Naive thymus-derived CD4-positive, alpha-beta T cell (primary cell): ENCODE measurements at regions of chr6 and their contacts with region 1.

Region 1: GRCh38 chr6:30877419-30878371 is 6.6 kb upstream of the DDR1 start:
- DNase-seq: peak; percentile 52 to 72 (median 63)
- ATAC-seq: peak; percentile 93
- H3K4me3 ChIP-seq: peak overlapping the region; percentile 40
- H3K4me3 Mint-ChIP-seq: peak overlapping the region; percentile 69 to 90 (median 86)
- H3K27ac ChIP-seq: peak overlapping the region; percentile 50
- H3K27ac Mint-ChIP-seq: peak overlapping the region; percentile 44 to 91 (median 84)
- H3K4me1 ChIP-seq: peaks cover 8 to 15% of the 10 kb centered on the region in 2 donors
- H3K4me1 Mint-ChIP-seq: peaks cover 10 to 31% (median 19%) of the 10 kb centered on the region in 7 donors
- H3K27me3 ChIP-seq: no peaks in the 10 kb centered on the region
- H3K27me3 Mint-ChIP-seq: peaks cover 0 to 7% (median 0%) of the 10 kb centered on the region in 5 donors

Region 2: DNA sequence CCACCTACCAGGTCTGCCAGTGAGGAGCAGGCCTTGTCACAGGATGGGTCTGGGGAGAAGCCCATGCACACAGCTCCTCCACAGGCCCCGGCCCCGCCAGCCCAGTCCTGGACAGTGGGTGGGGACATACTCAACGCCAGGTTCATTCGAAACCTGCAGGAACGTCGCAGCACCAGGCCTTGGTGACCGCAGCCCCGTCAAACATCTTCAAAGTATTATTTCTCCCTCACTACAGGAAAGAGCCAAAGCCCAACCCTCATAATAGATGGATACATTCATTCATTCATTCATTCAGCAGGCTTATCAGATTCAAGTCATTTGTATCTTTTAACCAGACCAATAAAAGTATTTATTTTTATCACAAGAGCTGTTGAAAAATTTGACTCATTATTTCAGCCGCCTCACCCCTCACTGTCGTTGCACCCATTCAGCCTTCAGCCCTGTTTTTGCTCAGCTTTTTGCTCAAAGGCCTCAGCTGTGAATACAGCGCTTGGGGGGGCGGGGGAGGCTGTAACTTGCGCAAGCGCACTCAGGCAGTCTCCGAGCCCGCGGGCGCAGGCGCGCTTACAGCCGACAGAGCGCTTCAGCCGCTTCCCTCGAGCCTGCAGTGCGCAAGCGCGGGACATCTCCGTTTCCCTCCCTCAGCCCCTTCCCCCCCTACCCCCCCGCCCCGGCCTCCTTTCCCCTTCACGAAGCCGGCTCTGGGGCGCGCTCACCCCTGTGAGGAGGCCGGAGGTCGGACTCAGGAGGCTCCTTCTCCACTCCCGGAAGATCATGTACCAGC is 231.0 kb before region 1 on chr6 and contains the start of gene C6orf136:
- CTCF ChIA-PET with region 1: no interaction called
- POLR2A ChIA-PET with region 1: no interaction called
- intact Hi-C with region 1: no loop called
- DNase-seq: peak in 8 of 9 donors; percentile 77 to 94 (median 92)
- ATAC-seq: peak; percentile 90
- H3K4me3 ChIP-seq: peak within 1 kb of the TSS; percentile 93
- H3K4me3 Mint-ChIP-seq: peak within 1 kb of the TSS; percentile 82 to 93 (median 88)
- H3K27ac ChIP-seq: peak within 1 kb of the TSS; percentile 91
- H3K27ac Mint-ChIP-seq: peak within 1 kb of the TSS; percentile 79 to 93 (median 91)
- H3K4me1 ChIP-seq: peaks cover 11 to 17% of the 10 kb centered on the region in 2 donors
- H3K4me1 Mint-ChIP-seq: peaks cover 24 to 38% (median 32%) of the 10 kb centered on the region in 7 donors
- H3K27me3 ChIP-seq: no peaks in the 10 kb centered on the region
- H3K27me3 Mint-ChIP-seq: no peaks in the 10 kb centered on the region
- total RNA-seq, gene C6orf136: 23.7 to 38.0 (median 32.1) TPM

Region 3: GRCh38 chr6:30678964-30679726 is 198.6 kb before region 1 on chr6:
- CTCF ChIA-PET with region 1: interaction called, 4 read pairs
- POLR2A ChIA-PET with region 1: no interaction called
- intact Hi-C with region 1: loop called in 1 of 2 experiments (anchors 1 kb)
- DNase-seq: peak; percentile 86 to 97 (median 92)
- ATAC-seq: peak; percentile 65
- H3K4me3 ChIP-seq: peak overlapping the region; percentile 98
- H3K4me3 Mint-ChIP-seq: peak overlapping the region; percentile 90 to 100 (median 97)
- H3K27ac ChIP-seq: peak overlapping the region; percentile 95
- H3K27ac Mint-ChIP-seq: peak overlapping the region; percentile 85 to 99 (median 97)
- H3K4me1 ChIP-seq: peaks cover 5 to 24% of the 10 kb centered on the region in 2 donors
- H3K4me1 Mint-ChIP-seq: peaks cover 20 to 47% (median 38%) of the 10 kb centered on the region in 7 donors
- H3K27me3 ChIP-seq: no peaks in the 10 kb centered on the region
- H3K27me3 Mint-ChIP-seq: no peaks in the 10 kb centered on the region

Region 4: GRCh38 chr6:30821862-30822782 is 55.6 kb before region 1 on chr6:
- CTCF ChIA-PET with region 1: interaction called, 172 read pairs
- POLR2A ChIA-PET with region 1: interaction called, 5 read pairs
- intact Hi-C with region 1: no loop called
- DNase-seq: peak in 2 of 9 donors; percentile 24 to 43
- ATAC-seq: peak; percentile 52
- H3K4me3 ChIP-seq: no peak overlapping the region
- H3K4me3 Mint-ChIP-seq: peak overlapping the region in 1 of 10 donors; percentile 22
- H3K27ac ChIP-seq: peak overlapping the region; percentile 6
- H3K27ac Mint-ChIP-seq: peak overlapping the region; percentile 39 to 99 (median 75)
- H3K4me1 ChIP-seq: peaks cover 9 to 13% of the 10 kb centered on the region in 2 donors
- H3K4me1 Mint-ChIP-seq: peaks cover 31 to 85% (median 77%) of the 10 kb centered on the region in 7 donors
- H3K27me3 ChIP-seq: no peaks in the 10 kb centered on the region
- H3K27me3 Mint-ChIP-seq: no peaks in the 10 kb centered on the region

Region 5: GRCh38 chr6:30960907-30961673 is 83.4 kb after region 1 on chr6:
- CTCF ChIA-PET with region 1: no interaction called
- POLR2A ChIA-PET with region 1: no interaction called
- intact Hi-C with region 1: no loop called
- DNase-seq: no peak
- ATAC-seq: no peak
- H3K4me3 ChIP-seq: no peak overlapping the region
- H3K4me3 Mint-ChIP-seq: no peak overlapping the region
- H3K27ac ChIP-seq: no peak overlapping the region
- H3K27ac Mint-ChIP-seq: peak overlapping the region in 1 of 9 donors; percentile 19
- H3K4me1 ChIP-seq: peaks cover under 1 to 6% of the 10 kb centered on the region in 2 donors
- H3K4me1 Mint-ChIP-seq: peaks cover 15 to 34% (median 19%) of the 10 kb centered on the region in 7 donors
- H3K27me3 ChIP-seq: no peaks in the 10 kb centered on the region
- H3K27me3 Mint-ChIP-seq: peaks cover 10 to 58% (median 38%) of the 10 kb centered on the region in 5 donors

Region 6: DNA sequence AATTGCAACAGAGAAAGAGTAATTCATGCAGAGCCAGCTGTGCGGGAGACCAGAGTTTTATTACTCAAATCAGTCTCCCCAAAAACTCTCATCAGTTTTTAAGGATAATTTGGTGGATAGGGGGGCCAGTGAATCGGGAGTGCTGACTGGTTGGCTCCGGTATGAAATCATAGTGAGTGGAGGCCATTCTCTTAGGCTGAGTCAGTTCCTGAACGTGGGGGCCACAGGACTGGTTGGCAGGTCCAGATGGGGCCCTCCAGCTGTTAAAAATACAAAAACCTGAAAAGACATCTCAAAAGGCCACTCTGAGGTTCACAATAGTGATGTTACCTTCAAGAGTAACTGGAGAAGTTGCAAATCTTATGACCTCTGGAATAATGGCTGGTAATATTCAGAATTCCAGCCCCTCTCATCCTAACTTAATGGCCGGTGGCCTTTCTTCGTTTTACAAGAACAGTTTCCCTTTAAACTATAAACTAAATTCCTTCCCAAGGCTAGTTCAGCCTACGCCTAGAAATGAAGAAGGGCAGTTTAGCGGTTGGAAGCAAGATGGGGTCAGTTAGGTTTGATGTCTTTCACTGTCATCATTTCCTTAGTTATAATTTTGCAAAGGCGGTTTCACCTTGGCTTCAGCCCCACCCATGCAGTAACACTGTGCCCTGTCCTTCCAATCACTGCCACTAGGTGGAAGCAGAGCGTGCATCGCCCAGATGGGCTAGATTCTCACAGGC is 518.9 kb after region 1 on chr6:
- CTCF ChIA-PET with region 1: no interaction called
- POLR2A ChIA-PET with region 1: no interaction called
- intact Hi-C with region 1: no loop called
- DNase-seq: peak; percentile 70 to 90 (median 84)
- ATAC-seq: peak; percentile 87
- H3K4me3 ChIP-seq: no peak overlapping the region
- H3K4me3 Mint-ChIP-seq: peak overlapping the region in 9 of 10 donors; percentile 32 to 86 (median 61)
- H3K27ac ChIP-seq: no peak overlapping the region
- H3K27ac Mint-ChIP-seq: peak overlapping the region in 6 of 9 donors; percentile 19 to 74 (median 42)
- H3K4me1 ChIP-seq: peaks cover 2 to 11% of the 10 kb centered on the region in 2 donors
- H3K4me1 Mint-ChIP-seq: peaks cover 21 to 45% (median 41%) of the 10 kb centered on the region in 7 donors
- H3K27me3 ChIP-seq: no peaks in the 10 kb centered on the region
- H3K27me3 Mint-ChIP-seq: peaks cover 0 to 4% (median 0%) of the 10 kb centered on the region in 5 donors